Gastrocnemius medialis (tissue), 4 donors: ENCODE measurements at regions of chr16 and their contacts with region 1.

Region 1: GRCh38 chr16:3983081-3983520 is 102.6 kb upstream of the CREBBP start:
- DNase-seq: peak; percentile 50 to 78
- ATAC-seq: peak; percentile 79 to 98
- H3K4me3 ChIP-seq: no peak overlapping the region
- H3K27ac ChIP-seq: peak overlapping the region in 1 of 4 donors; percentile 16
- H3K4me1 ChIP-seq: no peaks in the 10 kb centered on the region
- H3K27me3 ChIP-seq: no peaks in the 10 kb centered on the region
- CTCF ChIP-seq: peak; percentile 64 to 77 (median 64)
- POLR2A ChIP-seq: no peak

Region 2: DNA sequence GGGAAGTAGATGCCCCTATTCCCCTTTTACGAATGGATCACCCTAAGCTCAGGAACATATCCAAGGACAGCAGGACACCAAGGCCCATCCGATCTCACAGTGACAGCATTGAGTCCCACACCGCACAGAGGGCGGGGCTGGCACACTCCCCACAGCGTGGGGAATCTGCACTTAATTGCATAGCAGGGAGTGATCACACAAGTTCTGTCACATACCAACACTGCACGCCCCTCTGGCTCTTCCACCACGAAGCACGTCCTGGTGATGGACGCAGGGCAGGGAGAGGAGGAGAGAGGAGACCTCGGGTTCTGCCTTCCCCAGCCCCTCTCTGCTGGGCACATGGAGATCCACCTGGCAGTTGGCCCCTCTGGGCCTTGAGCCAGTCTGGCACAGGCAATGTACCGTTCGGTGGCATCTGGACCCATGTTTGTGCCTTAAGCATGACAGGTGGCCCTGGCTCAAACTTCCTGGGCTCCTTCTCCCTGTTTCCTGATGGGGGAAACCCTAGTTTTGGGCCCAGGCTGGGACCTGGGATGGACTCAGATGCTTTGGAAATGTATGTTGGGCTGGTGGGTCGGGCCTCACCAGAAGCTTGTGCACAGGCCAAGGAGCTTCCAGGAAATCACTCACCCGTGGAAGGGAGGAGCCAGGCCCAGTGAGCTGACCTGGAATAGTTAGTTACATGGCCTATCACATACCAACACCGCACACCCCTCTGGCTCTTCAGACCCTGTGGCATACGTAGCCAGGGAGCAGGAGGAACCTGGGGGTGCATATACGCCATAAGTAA is 67.5 kb before region 1 on chr16:
- in situ Hi-C with region 1: no loop called
- intact Hi-C with region 1: no loop called
- DNase-seq: no peak
- ATAC-seq: no peak
- H3K4me3 ChIP-seq: no peak overlapping the region
- H3K27ac ChIP-seq: no peak overlapping the region
- H3K4me1 ChIP-seq: no peaks in the 10 kb centered on the region
- H3K27me3 ChIP-seq: no peaks in the 10 kb centered on the region
- CTCF ChIP-seq: no peak
- POLR2A ChIP-seq: no peak

Region 3: DNA sequence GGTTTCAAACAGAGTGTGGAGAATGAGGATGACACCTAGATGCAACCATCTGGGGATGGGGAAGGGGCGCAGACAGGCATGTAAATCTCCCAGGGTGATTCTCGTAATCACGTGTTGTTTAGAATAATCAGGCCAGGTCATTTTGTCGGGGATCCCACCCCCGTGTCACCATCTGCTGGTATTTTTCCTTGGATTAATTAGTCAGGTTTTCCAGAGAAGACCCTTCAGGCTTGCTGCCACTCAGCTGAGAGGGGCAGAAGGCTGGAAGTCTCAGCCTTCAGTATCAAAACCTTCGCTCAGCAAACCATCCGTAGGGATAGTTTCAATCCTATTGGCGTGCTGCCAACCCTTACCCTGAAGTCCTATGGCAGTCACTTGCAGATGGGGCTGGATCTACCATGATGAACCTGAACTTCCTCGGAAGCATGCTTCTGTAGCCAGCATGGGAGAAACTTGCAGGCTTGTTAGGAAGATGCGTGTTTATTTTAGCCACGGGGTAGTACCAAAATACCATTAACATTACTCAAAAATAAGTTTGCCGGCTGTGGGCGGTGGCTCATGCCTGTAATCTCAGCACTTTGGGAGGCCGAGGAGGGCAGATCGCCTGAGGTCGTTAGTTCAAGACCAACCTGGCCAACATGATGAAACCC is 140.6 kb after region 1 on chr16:
- in situ Hi-C with region 1: loop called in 2 of 4 experiments (anchors 10 to 25 kb)
- intact Hi-C with region 1: no loop called
- DNase-seq: no peak
- ATAC-seq: no peak
- H3K4me3 ChIP-seq: no peak overlapping the region
- H3K27ac ChIP-seq: no peak overlapping the region
- H3K4me1 ChIP-seq: no peaks in the 10 kb centered on the region
- H3K27me3 ChIP-seq: no peaks in the 10 kb centered on the region
- CTCF ChIP-seq: no peak
- POLR2A ChIP-seq: no peak

Region 4: DNA sequence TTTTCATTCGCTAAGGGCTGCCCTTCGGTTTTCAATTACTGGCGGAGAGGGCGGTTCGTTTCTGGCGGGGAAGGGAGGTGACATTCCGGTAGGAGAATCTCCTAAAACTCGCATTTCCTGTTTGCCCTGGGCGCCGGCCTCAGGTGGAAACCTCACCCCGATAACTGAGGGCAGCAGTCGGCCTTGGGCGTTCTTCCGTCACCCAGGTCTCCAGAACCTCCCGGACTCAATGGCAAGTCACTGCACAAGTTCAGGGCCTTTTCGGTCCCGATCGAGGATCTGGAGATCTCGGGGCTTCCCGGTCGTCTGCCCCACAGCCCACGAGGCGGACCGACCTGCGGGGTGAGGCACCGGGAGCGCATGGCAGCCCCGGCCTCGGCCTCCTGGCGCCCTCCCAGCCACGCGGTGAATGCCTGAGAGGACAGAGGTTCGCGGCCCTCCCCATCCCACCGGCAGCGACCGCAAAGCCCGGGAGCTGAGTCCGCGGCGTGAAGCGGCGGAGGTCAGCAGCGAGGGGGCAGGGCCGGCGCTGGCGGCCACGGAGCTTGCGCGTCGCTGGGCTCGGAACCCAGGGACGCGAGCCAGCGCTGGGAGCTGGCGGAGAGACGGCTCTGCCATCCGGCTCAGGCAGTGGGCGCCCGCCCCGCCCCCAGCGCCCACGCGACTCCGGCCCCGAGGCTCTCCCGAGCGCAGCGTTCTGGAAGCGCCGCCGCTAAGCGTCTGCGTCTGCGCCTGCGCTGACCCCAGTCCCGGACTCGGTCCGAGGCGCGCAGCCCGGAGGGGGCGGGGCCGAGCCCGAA is 200.3 kb after region 1 on chr16:
- in situ Hi-C with region 1: no loop called
- intact Hi-C with region 1: loop called (anchors 5 kb)
- DNase-seq: peak; percentile 80 to 90
- ATAC-seq: peak; percentile 83 to 90
- H3K4me3 ChIP-seq: peak overlapping the region; percentile 65 to 96 (median 76)
- H3K27ac ChIP-seq: peak overlapping the region; percentile 93 to 98 (median 94)
- H3K4me1 ChIP-seq: peaks cover 4 to 11% of the 10 kb centered on the region in 2 donors
- H3K27me3 ChIP-seq: no peaks in the 10 kb centered on the region
- CTCF ChIP-seq: peak in 3 of 5 experiments; percentile 22 to 51 (median 43)
- POLR2A ChIP-seq: no peak